Gastrocnemius medialis (tissue), 4 donors: ENCODE measurements at regions of chr3 and their contacts with region 1.

Region 1: DNA sequence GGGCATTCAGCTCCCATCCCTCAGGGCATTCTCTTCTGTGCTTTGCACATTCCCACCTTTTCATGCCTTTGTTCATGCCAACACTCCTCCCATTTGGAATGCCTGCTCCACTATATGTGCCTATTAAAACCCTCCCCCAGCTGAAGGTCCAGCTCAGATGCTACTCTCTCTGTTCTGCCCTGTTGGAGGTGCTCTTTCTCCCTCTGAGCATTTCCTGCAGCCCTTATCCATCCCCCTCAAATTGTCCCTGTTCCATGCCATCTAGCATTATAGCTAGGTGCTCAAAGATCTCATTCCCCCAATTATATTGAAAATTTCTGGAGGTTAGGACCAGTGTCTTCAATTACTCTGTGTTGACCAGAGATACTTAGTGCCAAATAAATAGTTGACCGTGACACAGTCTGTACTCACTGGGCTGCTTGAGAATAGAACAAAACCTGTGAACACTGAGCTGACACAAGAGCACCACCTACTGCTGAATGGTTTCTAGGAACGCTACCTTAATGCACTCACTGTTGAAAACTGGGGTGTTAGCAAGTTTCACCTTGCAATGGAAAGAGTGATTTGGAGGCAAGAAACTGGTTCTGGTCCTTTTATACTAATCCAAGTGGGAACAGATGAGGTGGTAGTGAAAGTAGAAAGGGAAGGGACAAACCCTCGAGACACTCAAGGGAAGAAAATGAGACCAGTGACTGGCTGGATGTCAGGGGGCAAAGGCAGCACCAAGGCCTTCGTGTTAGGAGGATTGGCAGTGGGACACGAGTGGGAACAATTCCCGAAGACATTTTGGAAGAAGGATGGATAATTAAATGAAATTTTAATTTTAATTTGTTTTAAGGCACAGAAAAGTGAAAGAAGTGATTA is 289.8 kb upstream of the ROPN1 start:
- DNase-seq: no peak
- ATAC-seq: peak; percentile 53 to 63
- H3K4me3 ChIP-seq: no peak overlapping the region
- H3K27ac ChIP-seq: no peak overlapping the region
- H3K4me1 ChIP-seq: peaks cover 19 to 37% of the 10 kb centered on the region in 2 donors
- H3K27me3 ChIP-seq: no peaks in the 10 kb centered on the region
- CTCF ChIP-seq: peak in 4 of 5 experiments; percentile 31 to 60 (median 48)
- POLR2A ChIP-seq: no peak

Region 2: DNA sequence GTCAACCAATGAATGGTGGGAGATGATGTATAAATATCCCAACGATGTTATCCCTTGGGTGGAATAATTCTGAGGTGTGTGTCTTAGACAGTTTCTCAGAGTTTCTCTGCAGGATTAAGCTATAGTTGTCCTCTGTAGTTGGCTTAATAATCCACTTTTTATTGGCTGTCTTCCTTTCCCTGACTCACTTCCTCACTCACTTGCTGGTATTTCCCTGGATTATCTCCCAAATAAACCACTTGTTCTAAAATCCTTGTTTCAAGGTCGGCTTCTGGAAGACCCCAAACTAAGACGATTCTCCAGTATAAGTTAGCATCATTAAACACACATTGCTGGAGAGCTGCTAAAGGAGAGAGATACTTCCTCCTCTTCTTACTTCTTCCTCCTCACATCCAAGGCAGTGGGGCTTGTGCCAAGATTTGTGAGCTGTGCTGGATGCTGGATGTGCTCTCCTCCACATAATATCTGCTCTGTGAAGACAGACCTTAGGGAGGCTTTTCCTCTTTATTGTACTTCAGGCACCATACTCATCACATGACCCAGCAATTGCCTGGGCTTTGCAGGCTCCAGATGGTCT is 267.2 kb before region 1 on chr3:
- in situ Hi-C with region 1: loop called in 2 of 4 experiments (anchors 5 to 10 kb)
- intact Hi-C with region 1: loop called (anchors 1 kb)
- DNase-seq: no peak
- ATAC-seq: no peak
- H3K4me3 ChIP-seq: no peak overlapping the region
- H3K27ac ChIP-seq: no peak overlapping the region
- H3K4me1 ChIP-seq: no peaks in the 10 kb centered on the region
- H3K27me3 ChIP-seq: no peaks in the 10 kb centered on the region
- CTCF ChIP-seq: no peak
- POLR2A ChIP-seq: no peak

Region 3: GRCh38 chr3:124026516-124026915 is 255.2 kb before region 1 on chr3:
- in situ Hi-C with region 1: loop called in 1 of 4 experiments (anchors 10 kb)
- intact Hi-C with region 1: loop called (anchors 5 kb)
- DNase-seq: no peak
- ATAC-seq: no peak
- H3K4me3 ChIP-seq: no peak overlapping the region
- H3K27ac ChIP-seq: no peak overlapping the region
- H3K4me1 ChIP-seq: no peaks in the 10 kb centered on the region
- H3K27me3 ChIP-seq: no peaks in the 10 kb centered on the region
- CTCF ChIP-seq: no peak
- POLR2A ChIP-seq: no peak

Region 4: GRCh38 chr3:124032648-124033359 is 248.9 kb before region 1 on chr3:
- in situ Hi-C with region 1: loop called in 1 of 4 experiments (anchors 10 kb)
- intact Hi-C with region 1: loop called (anchors 5 kb)
- DNase-seq: peak; percentile 69 to 73
- ATAC-seq: peak; percentile 94 to 95
- H3K4me3 ChIP-seq: peak overlapping the region; percentile 80 to 89 (median 84)
- H3K27ac ChIP-seq: peak overlapping the region; percentile 85 to 95 (median 90)
- H3K4me1 ChIP-seq: peaks cover 6 to 12% of the 10 kb centered on the region in 2 donors
- H3K27me3 ChIP-seq: no peaks in the 10 kb centered on the region
- CTCF ChIP-seq: peak in 4 of 5 experiments; percentile 50 to 88 (median 74)
- POLR2A ChIP-seq: peak; percentile 8 to 30

Region 5: GRCh38 chr3:124131580-124131979 is 150.1 kb before region 1 on chr3:
- in situ Hi-C with region 1: no loop called
- intact Hi-C with region 1: no loop called
- DNase-seq: peak; percentile 44 to 63
- ATAC-seq: peak; percentile 96 to 98
- H3K4me3 ChIP-seq: no peak overlapping the region
- H3K27ac ChIP-seq: peak overlapping the region in 3 of 4 donors; percentile 16 to 65 (median 51)
- H3K4me1 ChIP-seq: peaks cover 16 to 40% of the 10 kb centered on the region in 2 donors
- H3K27me3 ChIP-seq: no peaks in the 10 kb centered on the region
- CTCF ChIP-seq: no peak
- POLR2A ChIP-seq: no peak

Region 6: GRCh38 chr3:124149771-124150170 is 131.9 kb before region 1 on chr3:
- in situ Hi-C with region 1: no loop called
- intact Hi-C with region 1: no loop called
- DNase-seq: no peak
- ATAC-seq: no peak
- H3K4me3 ChIP-seq: no peak overlapping the region
- H3K27ac ChIP-seq: no peak overlapping the region
- H3K4me1 ChIP-seq: peaks cover 9 to 12% of the 10 kb centered on the region in 2 donors
- H3K27me3 ChIP-seq: no peaks in the 10 kb centered on the region
- CTCF ChIP-seq: no peak
- POLR2A ChIP-seq: no peak